Heart right ventricle (tissue), 16 donors: ENCODE measurements at regions of chr14 and their contacts with region 1.

Region 1: GRCh38 chr14:63543000-63543825 is at the start of gene PPP2R5E:
- DNase-seq: peak; percentile 96 to 99
- ATAC-seq: peak; percentile 99 to 100 (median 99)
- H3K4me3 ChIP-seq: peak within 1 kb of the TSS; percentile 77 to 99 (median 92)
- H3K27ac ChIP-seq: peak within 1 kb of the TSS; percentile 81 to 96 (median 92)
- H3K4me1 ChIP-seq: peaks cover 0 to 32% (median 22%) of the 10 kb centered on the region in 9 donors
- H3K27me3 ChIP-seq: no peaks in the 10 kb centered on the region
- CTCF ChIP-seq: no peak
- total RNA-seq, gene PPP2R5E: 32.8 to 44.4 (median 37.0) TPM

Region 2: DNA sequence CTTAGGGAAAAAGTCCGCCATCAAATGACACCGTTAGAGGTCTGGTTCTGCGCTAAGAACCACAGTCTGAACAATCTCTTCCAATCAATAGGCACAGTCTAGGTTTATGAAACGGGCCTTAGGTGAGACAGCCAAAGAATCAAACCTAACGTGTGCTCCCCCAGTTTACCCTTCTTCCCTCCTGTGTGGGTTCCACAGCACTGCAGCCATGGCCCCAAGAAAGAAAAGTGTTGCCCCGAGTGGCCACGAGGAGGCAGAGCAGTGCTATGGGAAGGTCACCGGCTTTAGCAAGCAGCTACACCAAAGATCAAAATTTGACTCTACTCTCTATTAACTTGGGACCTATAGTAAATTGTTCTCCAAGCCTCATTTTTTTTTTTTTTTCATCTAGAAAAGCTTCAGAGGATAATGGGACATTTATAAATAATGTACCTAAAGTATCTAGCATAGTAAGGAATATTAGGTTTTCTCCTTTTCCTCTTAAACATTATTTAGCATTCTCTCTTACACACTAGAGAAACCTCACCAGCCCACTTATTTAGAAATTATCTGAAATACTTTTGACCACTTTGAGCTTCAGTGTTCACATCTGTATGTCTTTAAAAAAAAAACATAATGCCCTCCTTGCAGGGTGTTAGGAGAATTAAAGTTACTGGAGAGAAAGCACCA is 154.3 kb before region 1 on chr14:
- intact Hi-C with region 1: loop called in 9 of 10 experiments (anchors 1 to 10 kb)
- DNase-seq: peak; percentile 46 to 51
- ATAC-seq: peak in 7 of 8 donors; percentile 73 to 89 (median 86)
- H3K4me3 ChIP-seq: no peak overlapping the region
- H3K27ac ChIP-seq: no peak overlapping the region
- H3K4me1 ChIP-seq: no peaks in the 10 kb centered on the region
- H3K27me3 ChIP-seq: no peaks in the 10 kb centered on the region
- CTCF ChIP-seq: peak; percentile 58 to 87 (median 81)

Region 3: DNA sequence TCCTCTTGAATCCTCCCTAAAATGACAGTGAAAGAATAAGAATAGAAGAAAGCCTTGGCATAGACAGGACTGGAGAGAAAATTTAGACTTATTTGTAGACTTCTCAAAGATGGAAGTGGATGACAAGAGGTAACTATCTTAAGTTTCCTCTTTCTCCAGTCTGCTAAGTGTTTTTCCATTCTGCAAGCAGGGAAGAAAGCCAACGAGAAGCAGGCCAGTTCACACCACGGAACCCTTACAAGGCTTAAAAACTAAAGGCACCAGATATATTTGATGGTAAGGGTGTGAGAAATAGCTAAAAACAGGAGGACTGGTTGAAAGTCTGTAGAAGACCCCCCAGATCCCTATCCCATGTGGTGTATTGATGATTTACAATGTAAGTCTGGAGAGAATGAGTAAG is 141.6 kb before region 1 on chr14:
- intact Hi-C with region 1: loop called in 2 of 10 experiments (anchors 5 to 10 kb)
- DNase-seq: no peak
- ATAC-seq: no peak
- H3K4me3 ChIP-seq: no peak overlapping the region
- H3K27ac ChIP-seq: no peak overlapping the region
- H3K4me1 ChIP-seq: peaks cover 0 to 24% (median 13%) of the 10 kb centered on the region in 9 donors
- H3K27me3 ChIP-seq: no peaks in the 10 kb centered on the region
- CTCF ChIP-seq: no peak

Region 4: GRCh38 chr14:63437953-63438757 is 105.1 kb before region 1 on chr14:
- intact Hi-C with region 1: loop called in 5 of 10 experiments (anchors 2 to 10 kb)
- DNase-seq: peak; percentile 28 to 68
- ATAC-seq: peak; percentile 31 to 79 (median 60)
- H3K4me3 ChIP-seq: peak overlapping the region in 8 of 10 donors; percentile 4 to 31 (median 18)
- H3K27ac ChIP-seq: peak overlapping the region in 9 of 10 donors; percentile 51 to 81 (median 68)
- H3K4me1 ChIP-seq: peaks cover 18 to 78% (median 52%) of the 10 kb centered on the region in 9 donors
- H3K27me3 ChIP-seq: no peaks in the 10 kb centered on the region
- CTCF ChIP-seq: peak in 5 of 9 donors; percentile 5 to 43 (median 31)

Region 5: DNA sequence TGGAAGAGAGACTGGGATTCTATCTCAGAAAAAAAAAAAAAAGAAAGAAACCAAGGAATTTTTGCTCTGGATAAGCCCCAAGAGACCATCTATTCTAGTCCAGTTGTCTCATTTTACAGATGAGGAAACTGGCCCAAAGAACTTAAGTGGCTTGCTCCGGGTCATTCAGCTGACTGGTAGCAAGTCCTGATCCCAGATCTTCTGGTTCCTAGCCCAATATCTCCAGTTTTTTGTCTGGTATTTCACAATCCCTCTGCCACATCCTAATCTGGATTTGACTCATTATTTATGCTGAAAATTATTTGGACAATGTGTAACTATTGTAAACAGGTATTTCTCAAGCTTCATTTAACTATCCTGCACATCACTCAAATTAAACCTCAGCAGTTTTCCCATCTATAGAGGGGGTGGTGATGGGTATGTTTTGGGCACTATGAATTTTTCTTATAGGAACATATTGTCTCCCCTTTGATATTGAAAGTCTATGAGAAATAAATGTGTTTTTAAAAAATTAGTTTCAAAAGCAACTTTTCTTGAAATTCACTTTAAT is 43.4 kb before region 1 on chr14:
- intact Hi-C with region 1: loop called in 1 of 10 experiments (anchors 5 kb)
- DNase-seq: no peak
- ATAC-seq: peak in 3 of 8 donors; percentile 16 to 74 (median 25)
- H3K4me3 ChIP-seq: no peak overlapping the region
- H3K27ac ChIP-seq: peak overlapping the region in 2 of 10 donors; percentile 18 to 31
- H3K4me1 ChIP-seq: peaks cover 0 to 41% (median 21%) of the 10 kb centered on the region in 9 donors
- H3K27me3 ChIP-seq: no peaks in the 10 kb centered on the region
- CTCF ChIP-seq: no peak

Region 6: GRCh38 chr14:63632932-63633514 is 89.8 kb after region 1 on chr14:
- intact Hi-C with region 1: loop called in 2 of 10 experiments (anchors 5 to 10 kb)
- DNase-seq: no peak
- ATAC-seq: no peak
- H3K4me3 ChIP-seq: no peak overlapping the region
- H3K27ac ChIP-seq: no peak overlapping the region
- H3K4me1 ChIP-seq: no peaks in the 10 kb centered on the region
- H3K27me3 ChIP-seq: no peaks in the 10 kb centered on the region
- CTCF ChIP-seq: peak in 7 of 9 donors; percentile 30 to 57 (median 45)

Region 7: GRCh38 chr14:63641473-63642228 is 98.4 kb after region 1 on chr14 and contains the start of gene WDR89:
- intact Hi-C with region 1: loop called in 6 of 10 experiments (anchors 5 to 10 kb)
- DNase-seq: peak; percentile 93 to 97
- ATAC-seq: peak; percentile 97 to 99 (median 98)
- H3K4me3 ChIP-seq: peak within 1 kb of the TSS; percentile 51 to 80 (median 68)
- H3K27ac ChIP-seq: peak within 1 kb of the TSS; percentile 62 to 96 (median 90)
- H3K4me1 ChIP-seq: peaks cover 0 to 25% (median 12%) of the 10 kb centered on the region in 9 donors
- H3K27me3 ChIP-seq: no peaks in the 10 kb centered on the region
- CTCF ChIP-seq: peak; percentile 49 to 76 (median 72)
- total RNA-seq, gene WDR89: 5.5 to 6.9 (median 6.1) TPM